PC-9 (cell line): ENCODE measurements at regions of chr22 and their contacts with region 1.

Region 1: GRCh38 chr22:40651563-40652501 is 15.3 kb upstream of the MRTFA start:
- DNase-seq: peak; percentile 95 to 99
- H3K4me3 ChIP-seq: peak overlapping the region; percentile 68
- H3K27ac ChIP-seq: peak overlapping the region; percentile 98
- H3K4me1 ChIP-seq: peaks cover 15% of the 10 kb centered on the region
- H3K27me3 ChIP-seq: no peaks in the 10 kb centered on the region
- CTCF ChIP-seq: no peak

Region 2: DNA sequence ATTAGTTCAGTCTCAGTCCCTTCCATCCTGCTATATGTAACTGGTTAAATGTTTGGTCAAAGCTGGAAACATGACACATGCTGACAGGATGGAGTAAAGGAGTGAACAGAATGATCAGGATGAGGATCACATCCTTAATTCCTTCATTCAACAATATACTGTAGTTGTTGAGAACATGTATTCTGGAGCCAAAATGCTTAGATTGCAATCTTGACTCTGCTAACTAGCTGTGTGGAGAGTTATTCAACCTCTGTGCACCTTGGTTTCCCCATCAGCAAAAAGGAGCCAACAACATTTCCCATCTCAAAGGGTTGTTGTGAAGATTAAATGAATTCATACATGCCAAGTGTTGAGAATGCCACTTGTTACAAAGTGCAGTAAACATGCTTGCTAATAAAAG is 771.1 kb before region 1 on chr22:
- CTCF ChIA-PET with region 1: no interaction called
- POLR2A ChIA-PET with region 1: interaction called, 11 read pairs
- intact Hi-C with region 1: no loop called
- DNase-seq: no peak
- H3K4me3 ChIP-seq: no peak overlapping the region
- H3K27ac ChIP-seq: no peak overlapping the region
- H3K4me1 ChIP-seq: no peaks in the 10 kb centered on the region
- H3K27me3 ChIP-seq: peaks cover 60% of the 10 kb centered on the region
- CTCF ChIP-seq: no peak

Region 3: GRCh38 chr22:40436505-40437451 is 215.1 kb before region 1 on chr22:
- CTCF ChIA-PET with region 1: interaction called, 5 read pairs
- POLR2A ChIA-PET with region 1: interaction called, 10 read pairs
- intact Hi-C with region 1: loop called (anchors 1 kb)
- DNase-seq: peak; percentile 34 to 44
- H3K4me3 ChIP-seq: no peak overlapping the region
- H3K27ac ChIP-seq: no peak overlapping the region
- H3K4me1 ChIP-seq: peaks cover 3% of the 10 kb centered on the region; the same call in 1 of the 2 replicates
- H3K27me3 ChIP-seq: no peaks in the 10 kb centered on the region
- CTCF ChIP-seq: peak; percentile 94

Region 4: DNA sequence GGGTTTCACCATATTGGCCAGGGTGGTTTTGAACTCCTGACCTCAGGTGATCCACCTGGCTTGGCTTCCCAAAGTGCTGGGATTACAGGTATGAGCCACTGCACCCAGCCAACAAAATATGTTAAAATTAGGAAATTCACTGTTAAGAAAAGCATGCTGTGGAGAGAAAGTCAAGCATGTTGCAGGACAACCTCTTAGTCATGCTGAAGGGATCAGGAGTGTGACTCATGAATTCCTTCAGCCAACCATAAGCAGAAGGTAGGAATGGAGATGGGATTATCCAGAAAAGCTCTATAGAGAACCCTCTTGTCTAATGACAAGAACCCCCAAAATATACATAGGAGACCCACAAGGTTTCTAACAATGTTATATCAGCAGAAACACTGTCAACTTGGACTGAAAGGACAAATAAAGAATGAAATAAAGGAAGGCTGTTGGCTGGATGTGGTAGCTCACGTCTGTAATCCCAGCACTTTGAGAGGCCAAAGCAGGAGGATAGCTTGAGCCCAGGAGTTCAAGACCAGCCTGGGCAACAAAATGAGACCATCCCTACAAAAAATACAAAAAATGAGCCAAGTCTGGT is 31.3 kb before region 1 on chr22:
- CTCF ChIA-PET with region 1: no interaction called
- POLR2A ChIA-PET with region 1: no interaction called
- intact Hi-C with region 1: no loop called
- DNase-seq: peak in 1 of 2 experiments; percentile 82
- H3K4me3 ChIP-seq: no peak overlapping the region
- H3K27ac ChIP-seq: peak overlapping the region; percentile 44
- H3K4me1 ChIP-seq: peaks cover 5% of the 10 kb centered on the region; the same call in 1 of the 2 replicates
- H3K27me3 ChIP-seq: no peaks in the 10 kb centered on the region
- CTCF ChIP-seq: no peak

Region 5: DNA sequence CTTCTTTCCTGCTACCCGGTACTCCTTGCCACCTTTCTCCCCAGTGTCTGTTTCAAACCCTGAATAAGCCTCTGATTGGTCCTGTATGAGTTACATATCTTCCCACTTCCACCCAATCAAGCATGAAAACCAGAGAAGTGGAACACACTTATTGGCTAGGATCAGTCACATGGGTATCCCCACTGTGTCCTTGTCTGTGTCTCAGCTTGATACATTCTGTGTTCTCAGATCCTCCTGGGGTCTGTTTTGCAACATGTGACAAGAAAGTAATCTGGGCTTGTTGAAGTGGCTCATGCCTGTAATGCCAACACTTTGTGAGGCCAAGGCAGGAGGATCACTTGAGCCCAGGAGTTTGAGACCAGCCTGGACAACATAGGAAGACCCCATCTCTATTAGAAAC is 51.3 kb after region 1 on chr22:
- CTCF ChIA-PET with region 1: no interaction called
- POLR2A ChIA-PET with region 1: interaction called, 12 read pairs
- intact Hi-C with region 1: no loop called
- DNase-seq: no peak
- H3K4me3 ChIP-seq: no peak overlapping the region
- H3K27ac ChIP-seq: no peak overlapping the region
- H3K4me1 ChIP-seq: no peaks in the 10 kb centered on the region
- H3K27me3 ChIP-seq: no peaks in the 10 kb centered on the region
- CTCF ChIP-seq: no peak

Region 6: DNA sequence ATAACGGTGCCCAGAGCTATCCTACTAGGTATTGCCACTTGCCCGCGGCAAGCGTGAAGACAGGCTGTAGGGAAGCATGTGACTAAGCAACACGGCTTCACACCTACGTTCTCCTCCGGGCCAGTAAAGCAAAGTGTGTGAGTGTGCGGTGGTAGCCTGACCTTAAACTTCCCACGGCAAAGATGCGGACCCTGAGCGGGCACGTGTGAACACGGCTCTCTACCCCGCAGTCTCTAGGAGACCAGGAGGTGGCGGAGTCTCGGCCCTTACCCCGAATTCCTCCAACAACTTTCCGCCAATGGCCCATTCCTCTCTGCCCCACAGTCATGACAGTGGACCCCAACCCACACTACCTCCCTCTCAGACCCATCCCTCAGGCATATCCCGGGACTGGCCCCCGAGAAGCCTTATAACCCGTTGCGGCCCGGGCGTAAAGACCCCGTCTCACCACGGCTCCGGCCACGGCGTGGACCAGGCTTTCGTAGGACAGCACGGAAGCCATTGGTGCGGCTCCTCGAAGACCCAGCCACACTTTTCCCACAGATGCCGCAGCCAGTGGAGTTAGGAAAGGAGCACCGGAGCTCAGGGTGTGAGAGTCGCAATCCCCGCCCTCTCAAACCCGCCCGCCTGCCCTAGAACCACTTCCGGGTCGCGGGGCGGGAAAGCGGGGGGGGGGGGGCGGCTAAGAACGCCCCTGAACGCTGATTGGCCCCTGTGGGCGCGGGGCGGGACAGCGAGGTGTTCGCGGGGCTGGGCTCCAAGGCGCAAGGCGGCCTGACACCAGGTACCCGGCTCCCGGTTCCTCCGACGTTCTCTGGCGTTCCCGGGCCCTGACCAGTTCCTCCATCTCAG is 167.1 kb after region 1 on chr22 and contains the start of gene SLC25A17:
- CTCF ChIA-PET with region 1: no interaction called
- POLR2A ChIA-PET with region 1: no interaction called
- intact Hi-C with region 1: loop called (anchors 1 kb)
- DNase-seq: peak; percentile 78 to 85
- H3K4me3 ChIP-seq: peak within 1 kb of the TSS; percentile 98
- H3K27ac ChIP-seq: peak within 1 kb of the TSS; percentile 45
- H3K4me1 ChIP-seq: peaks cover 20% of the 10 kb centered on the region
- H3K27me3 ChIP-seq: no peaks in the 10 kb centered on the region
- CTCF ChIP-seq: peak; percentile 42; the same call in 1 of the 2 replicates
- total RNA-seq, gene SLC25A17: 25.0 and 28.1 TPM in 2 replicates